ENCODE measurements at regions of chr12 and their contacts with region 1.

Region 1: DNA sequence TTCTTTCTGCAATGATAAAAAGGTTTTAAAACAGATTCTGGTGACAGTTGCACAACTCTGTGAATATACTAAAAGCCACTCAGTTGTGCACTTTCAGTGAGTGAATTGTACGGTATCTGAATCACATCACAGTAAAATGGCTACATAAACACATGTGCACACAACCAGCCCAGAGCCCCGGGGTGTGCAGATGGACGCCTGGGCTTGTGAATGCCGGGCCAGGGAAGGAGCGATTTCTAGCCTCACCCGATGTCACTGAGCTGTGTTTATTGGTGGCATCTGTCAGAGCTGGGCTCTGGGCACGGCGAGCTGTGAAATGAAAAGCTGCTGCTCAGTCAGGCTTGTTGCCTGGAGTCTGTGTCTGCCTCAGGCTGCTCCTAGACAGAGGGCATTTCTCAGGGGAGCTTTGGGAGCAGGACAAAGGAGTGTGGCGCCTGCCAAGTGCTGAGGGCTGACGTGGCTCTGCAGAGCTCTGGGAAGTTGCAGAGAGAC is 25.9 kb downstream of the RHOF start:
- DNase-seq: no peak
- H3K4me3 ChIP-seq: no peak overlapping the region
- H3K27ac ChIP-seq: no peak overlapping the region
- H3K4me1 ChIP-seq: no peaks in the 10 kb centered on the region
- H3K27me3 ChIP-seq: no peaks in the 10 kb centered on the region

Region 2: GRCh38 chr12:121712461-121713256 is 54.9 kb before region 1 on chr12 and contains the start of gene TMEM120B:
- CTCF ChIA-PET with region 1: interaction called, 17 read pairs
- POLR2A ChIA-PET with region 1: no interaction called
- DNase-seq: peak; percentile 65 to 78 (median 73)
- H3K4me3 ChIP-seq: peak within 1 kb of the TSS; percentile 44 to 92 (median 83)
- H3K27ac ChIP-seq: peak within 1 kb of the TSS; percentile 33 to 82
- H3K4me1 ChIP-seq: peaks cover 3 to 30% (median 19%) of the 10 kb centered on the region in 4 experiments
- H3K27me3 ChIP-seq: no peaks in the 10 kb centered on the region

Region 3: GRCh38 chr12:121755591-121755990 is 12.0 kb before region 1 on chr12:
- CTCF ChIA-PET with region 1: interaction called, 10 read pairs
- POLR2A ChIA-PET with region 1: no interaction called
- DNase-seq: no peak
- H3K4me3 ChIP-seq: no peak overlapping the region
- H3K27ac ChIP-seq: peak overlapping the region in 1 of 2 experiments; percentile 2
- H3K4me1 ChIP-seq: peaks cover 0 to 4% (median 0%) of the 10 kb centered on the region in 4 experiments
- H3K27me3 ChIP-seq: no peaks in the 10 kb centered on the region

Measured in common myeloid progenitor, CD34-positive (primary cell).